A549 (cell line): ENCODE measurements at regions of chr11 and their contacts with region 1.

Region 1: GRCh38 chr11:2912498-2912897 is 16.7 kb downstream of the PHLDA2 start:
- DNase-seq: peak; percentile 76 to 87
- ATAC-seq: peak; percentile 72 to 87
- H3K4me3 ChIP-seq: 0 out of 3 replicates have a peak overlapping the region, but pooled peaks have one; percentile 25
- H3K27ac ChIP-seq: peak overlapping the region; percentile 84 to 90
- H3K4me1 ChIP-seq: peaks cover 31% of the 10 kb centered on the region
- CTCF ChIP-seq: no peak
- EP300 ChIP-seq: no peak
- POLR2A ChIP-seq: no peak
- RAD21 ChIP-seq: no peak

Region 2: GRCh38 chr11:2400069-2400760 is 512.3 kb before region 1 on chr11 and contains the start of gene TSSC4:
- CTCF ChIA-PET with region 1: no interaction called
- POLR2A ChIA-PET with region 1: no interaction called
- DNase-seq: peak; percentile 99 to 100
- ATAC-seq: peak; percentile 86 to 93
- H3K4me3 ChIP-seq: peak within 1 kb of the TSS; percentile 100
- H3K27ac ChIP-seq: peak within 1 kb of the TSS; percentile 97 to 98
- H3K4me1 ChIP-seq: peaks cover 16% of the 10 kb centered on the region
- CTCF ChIP-seq: peak; percentile 91
- EP300 ChIP-seq: no peak
- POLR2A ChIP-seq: peak; percentile 89
- RAD21 ChIP-seq: peak; percentile 60 to 66
- polyA plus RNA-seq, gene TSSC4: 21.8 and 22.2 TPM in 2 replicates

Region 3: DNA sequence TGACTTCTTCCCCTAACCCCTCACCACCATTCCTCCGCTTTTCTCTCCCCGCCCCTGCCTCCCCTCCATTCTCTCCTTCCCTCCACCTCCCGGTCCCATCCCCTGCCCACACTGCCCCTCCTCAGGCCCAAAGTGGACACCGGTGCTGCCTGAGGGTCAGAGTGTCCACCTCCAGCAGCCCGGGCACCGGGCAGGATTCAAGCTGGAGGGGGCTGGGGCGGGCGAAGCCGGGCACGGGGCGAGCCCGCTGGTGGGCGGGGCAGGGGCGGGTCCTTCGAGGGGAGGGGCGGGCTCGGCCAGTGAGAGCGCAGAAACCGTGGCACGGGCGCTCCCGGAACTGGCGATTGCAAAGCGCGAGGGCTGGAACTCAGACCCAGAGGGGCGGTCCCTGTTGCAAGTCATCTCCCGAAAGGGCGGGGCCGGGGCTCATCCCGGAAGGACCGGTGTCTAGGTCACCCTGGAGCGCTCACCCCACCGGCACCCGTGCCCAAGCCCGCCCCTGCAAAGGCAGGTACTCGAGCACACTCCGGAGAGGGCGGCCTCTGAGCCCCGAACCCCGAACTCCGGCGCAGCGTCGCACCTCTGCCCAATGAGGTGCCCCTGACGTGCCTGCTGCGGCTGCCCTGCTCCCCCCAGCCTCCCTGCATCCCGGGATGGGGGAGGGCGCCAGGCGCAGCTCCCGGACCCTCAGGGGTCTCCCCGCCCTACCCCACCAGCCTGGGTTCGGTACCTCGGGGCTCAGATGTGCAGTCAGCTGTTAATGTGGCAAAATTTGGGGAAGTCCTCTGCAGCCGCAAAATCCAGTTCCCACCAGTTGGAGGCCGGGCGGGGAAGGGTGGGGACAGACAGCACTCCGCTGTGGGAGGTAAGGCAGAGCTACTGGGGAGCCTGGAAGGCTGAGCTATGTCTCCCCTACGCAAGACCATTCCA is 10.4 kb before region 1 on chr11:
- CTCF ChIA-PET with region 1: interaction called, 12 read pairs
- POLR2A ChIA-PET with region 1: interaction called, 9 read pairs
- DNase-seq: peak; percentile 94 to 95
- ATAC-seq: peak; percentile 69 to 88
- H3K4me3 ChIP-seq: peak overlapping the region; percentile 90
- H3K27ac ChIP-seq: peak overlapping the region; percentile 97 to 98
- H3K4me1 ChIP-seq: peaks cover 38% of the 10 kb centered on the region
- CTCF ChIP-seq: no peak
- EP300 ChIP-seq: no peak
- POLR2A ChIP-seq: peak; percentile 37
- RAD21 ChIP-seq: no peak

Region 4: DNA sequence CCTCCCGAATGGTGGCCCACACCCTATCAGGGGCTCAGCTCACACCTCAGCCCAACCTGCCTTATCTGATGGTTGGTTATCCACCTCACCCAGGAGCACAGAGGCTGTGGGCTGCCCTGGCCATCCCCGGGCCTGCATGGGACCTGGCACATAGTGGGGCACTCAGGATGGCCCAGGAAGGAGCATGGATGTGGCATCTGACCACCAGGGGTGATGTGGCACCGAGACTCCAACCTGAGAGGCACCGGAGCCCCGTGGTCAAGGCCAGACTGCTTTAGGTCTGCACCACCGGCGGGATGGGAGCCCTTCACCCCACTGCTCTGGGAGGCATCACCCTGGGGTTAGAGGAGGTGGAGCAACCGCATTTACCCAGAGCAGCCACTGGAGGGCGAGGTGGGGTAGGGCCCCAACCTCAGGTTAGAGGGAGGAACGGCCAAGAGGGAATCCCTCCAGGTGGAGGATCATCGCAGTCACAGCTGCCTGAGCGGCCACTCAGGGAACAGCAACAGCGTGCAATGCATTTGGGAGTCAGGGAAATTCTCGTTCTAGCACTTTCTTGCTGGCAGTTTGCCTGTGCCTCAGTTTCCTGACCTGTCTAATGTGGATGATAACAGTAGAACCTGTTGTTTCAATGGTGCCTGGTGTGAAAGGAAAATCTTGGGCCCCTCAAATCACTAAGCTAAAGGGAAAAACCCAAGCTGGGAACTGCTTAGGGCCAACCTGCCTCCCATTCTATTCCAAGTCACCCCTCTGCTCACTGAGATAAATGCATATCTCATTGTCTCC is 197.6 kb after region 1 on chr11:
- CTCF ChIA-PET with region 1: no interaction called
- POLR2A ChIA-PET with region 1: interaction called, 11 read pairs
- DNase-seq: peak; percentile 36 to 60
- ATAC-seq: peak; percentile 68 to 86; a peak in 5 of 6 replicates
- H3K4me3 ChIP-seq: no peak overlapping the region
- H3K27ac ChIP-seq: no peak overlapping the region
- H3K4me1 ChIP-seq: no peaks in the 10 kb centered on the region
- CTCF ChIP-seq: peak; percentile 17; the same call in 1 of the 3 replicates
- EP300 ChIP-seq: no peak
- POLR2A ChIP-seq: no peak
- RAD21 ChIP-seq: peak in 1 of 2 experiments; percentile 44; a peak in 2 of 5 replicates